ENCODE measurements at regions of chr4 and their contacts with region 1.

Region 1: DNA sequence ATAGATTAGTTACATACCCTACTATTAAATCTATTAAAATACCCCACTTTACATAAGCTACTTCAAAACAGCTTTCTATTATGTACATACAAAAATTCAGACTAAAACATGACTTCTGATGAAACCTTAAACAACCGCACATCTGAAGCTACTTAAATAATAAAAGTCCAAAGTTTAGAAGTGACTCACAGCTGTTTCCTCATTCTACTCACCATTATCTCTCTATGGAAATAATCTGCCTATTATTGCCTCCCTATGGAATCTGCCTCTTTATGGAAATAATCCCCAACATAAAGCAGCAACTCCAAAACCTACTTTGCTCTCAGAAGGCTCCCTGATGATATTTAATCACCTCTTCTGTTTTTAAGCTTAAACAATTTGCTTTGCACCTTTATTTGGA is 15.7 kb upstream of the BANK1 start:
- DNase-seq: no peak
- H3K4me3 ChIP-seq: no peak overlapping the region
- H3K27ac ChIP-seq: no peak overlapping the region
- H3K4me1 ChIP-seq: no peaks in the 10 kb centered on the region
- H3K27me3 ChIP-seq: no peaks in the 10 kb centered on the region
- CTCF ChIP-seq: no peak

Region 2: GRCh38 chr4:100895556-100896197 is 879.1 kb before region 1 on chr4:
- CTCF ChIA-PET with region 1: no interaction called
- dilution Hi-C with region 1: no loop called
- in situ Hi-C with region 1: loop called in 1 of 2 experiments (anchors 25 kb)
- intact Hi-C with region 1: no loop called
- DNase-seq: no peak
- H3K4me3 ChIP-seq: no peak overlapping the region
- H3K27ac ChIP-seq: no peak overlapping the region
- H3K4me1 ChIP-seq: no peaks in the 10 kb centered on the region
- H3K27me3 ChIP-seq: peaks cover 8% of the 10 kb centered on the region
- CTCF ChIP-seq: no peak

Measured in mammary epithelial cell (primary cell).